ENCODE measurements at regions of chr10 and their contacts with region 1.

Region 1: GRCh38 chr10:123967396-123968243 is 76.0 kb upstream of the CPXM2 start:
- DNase-seq: peak; percentile 90

Region 2: DNA sequence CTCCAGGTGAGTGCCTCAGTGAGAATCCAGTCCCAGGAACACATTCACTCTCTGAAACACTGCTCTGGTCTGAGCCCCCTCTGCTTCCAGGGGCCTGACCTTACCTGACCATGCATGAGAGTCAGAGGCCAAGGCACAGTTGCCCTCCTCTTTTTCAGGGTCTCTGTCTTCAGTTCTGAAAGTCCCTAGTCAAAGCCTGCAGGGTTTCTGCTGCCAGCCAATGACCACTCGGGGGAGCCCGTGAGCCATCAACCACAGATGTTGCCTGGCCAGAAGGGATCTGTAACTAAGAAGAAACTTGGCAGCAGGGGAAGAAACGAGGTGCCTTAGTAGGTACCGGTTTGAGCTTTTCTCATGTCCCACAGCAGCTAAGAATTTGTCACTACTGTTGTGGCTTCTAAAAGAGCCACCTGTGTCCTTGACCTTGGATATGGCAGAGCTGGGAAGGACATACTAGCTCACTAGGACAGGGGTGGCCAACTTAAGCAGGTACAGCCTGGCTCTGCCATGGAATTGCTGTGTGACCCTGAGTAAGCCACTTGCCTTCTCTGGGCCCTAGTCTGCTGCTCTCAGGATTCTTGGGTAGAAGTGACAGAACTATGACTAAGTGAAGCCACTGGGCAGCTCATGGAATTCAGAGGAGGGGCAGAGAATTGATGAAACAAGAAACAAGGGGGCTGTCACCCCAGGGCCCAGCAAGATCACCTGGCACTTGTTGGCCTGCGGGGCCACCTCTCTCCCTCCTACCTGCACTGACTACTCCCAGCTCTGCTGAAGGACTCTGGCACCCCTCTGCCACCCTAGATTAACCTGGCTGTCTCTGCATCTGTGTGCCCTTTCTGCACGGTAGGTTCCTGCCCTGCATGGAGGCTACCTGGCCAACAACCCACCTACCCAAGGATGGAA is 385.3 kb before region 1 on chr10:
- intact Hi-C with region 1: loop called in 1 of 2 experiments (anchors 1 kb)
- DNase-seq: peak; percentile 94

Region 3: DNA sequence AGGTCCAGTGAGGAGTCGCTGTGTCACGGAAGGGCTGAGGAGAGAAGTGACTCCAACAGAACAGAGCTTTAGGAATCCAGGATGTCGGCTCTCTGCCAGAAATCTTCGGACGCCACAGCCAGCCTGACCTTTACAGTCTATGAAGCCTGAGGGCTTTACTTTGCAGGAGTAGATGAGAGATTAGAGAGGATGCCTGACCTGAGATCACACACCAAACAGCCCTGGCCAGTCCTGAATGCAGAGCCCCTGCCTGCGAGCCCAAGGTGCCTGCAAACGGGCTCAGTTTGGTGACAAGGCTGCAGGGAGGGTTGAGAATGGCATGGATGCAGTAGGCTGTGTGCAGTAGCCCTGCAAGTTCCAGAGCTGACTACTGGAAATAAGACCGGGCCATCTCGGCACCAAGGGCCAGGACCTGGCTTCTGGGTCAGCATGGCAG is 223.6 kb before region 1 on chr10:
- intact Hi-C with region 1: loop called (anchors 10 kb)
- DNase-seq: no peak

Region 4: GRCh38 chr10:123772645-123773508 is 194.7 kb before region 1 on chr10:
- intact Hi-C with region 1: loop called in 1 of 2 experiments (anchors 10 kb)
- DNase-seq: no peak

Region 5: GRCh38 chr10:123945325-123945920 is 22.2 kb before region 1 on chr10:
- intact Hi-C with region 1: no loop called
- DNase-seq: no peak

Measured in posterior vena cava (tissue), 2 donors.